ENCODE measurements at regions of chr11 and their contacts with region 1.

Region 1: GRCh38 chr11:119381181-119381988 is at the start of gene USP2:
- DNase-seq: peak; percentile 96
- ATAC-seq: peak; percentile 99
- H3K4me3 ChIP-seq: peak within 1 kb of the TSS; percentile 50
- H3K27ac ChIP-seq: no peak within 1 kb of the TSS; the same call in 1 of the 2 replicates
- H3K4me1 ChIP-seq: peaks cover 10% of the 10 kb centered on the region
- H3K27me3 ChIP-seq: peaks cover 20% of the 10 kb centered on the region
- CTCF ChIP-seq: peak; percentile 96
- POLR2A ChIP-seq: no peak; the same call in 1 of the 2 replicates
- RAD21 ChIP-seq: peak; percentile 72
- total RNA-seq, gene USP2: under 0.01 and 0.18 TPM in 2 replicates

Region 2: DNA sequence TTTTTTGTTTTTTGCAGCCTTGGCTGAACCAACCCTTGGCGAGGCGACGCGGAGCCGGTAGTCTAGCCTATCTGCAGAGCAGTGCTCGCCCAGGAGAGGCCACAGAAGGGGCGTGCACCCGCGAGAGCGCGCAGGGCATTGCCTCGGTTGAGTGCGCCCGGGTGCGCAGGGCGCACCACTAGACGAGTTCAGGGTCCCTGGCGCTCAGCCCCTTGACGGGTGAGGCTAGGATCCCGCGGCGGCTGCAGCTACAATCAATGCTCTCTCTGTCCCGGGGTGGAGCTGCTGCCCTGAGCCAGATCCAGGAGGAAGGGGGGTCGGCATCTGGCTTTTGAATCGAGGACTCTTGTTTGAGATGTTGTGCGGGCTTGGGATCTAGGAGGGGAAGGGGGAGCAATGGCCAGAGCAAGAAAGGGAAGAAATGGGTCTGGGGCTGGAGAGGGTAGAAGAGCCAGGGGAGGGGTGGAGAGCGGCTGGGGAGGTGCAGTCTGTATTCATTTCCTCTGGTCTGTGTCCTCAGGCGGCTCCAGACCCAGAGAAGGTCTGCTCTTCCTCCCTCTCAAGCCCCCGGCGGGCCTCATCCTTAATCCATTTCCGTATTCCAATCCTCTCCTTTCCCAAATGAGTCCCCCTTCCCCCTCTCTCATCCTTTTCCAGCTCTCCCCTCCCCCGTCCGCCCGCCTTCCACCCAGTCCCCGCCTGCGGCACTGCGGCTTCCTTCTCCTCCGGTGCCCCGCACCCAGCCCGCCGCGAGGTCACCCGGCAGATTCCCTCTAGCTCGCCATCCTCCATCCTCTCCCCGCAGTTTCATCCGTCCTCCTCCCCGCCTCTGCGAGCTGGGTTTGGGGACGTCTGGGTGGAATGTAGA is 40.8 kb after region 1 on chr11:
- CTCF ChIA-PET with region 1: no interaction called
- POLR2A ChIA-PET with region 1: no interaction called
- dilution Hi-C with region 1: no loop called
- in situ Hi-C with region 1: no loop called
- intact Hi-C with region 1: loop called (anchors 2 kb)
- DNase-seq: peak; percentile 34
- ATAC-seq: peak; percentile 45
- H3K4me3 ChIP-seq: peak overlapping the region; percentile 77
- H3K27ac ChIP-seq: peak overlapping the region; percentile 83
- H3K4me1 ChIP-seq: peaks cover 20% of the 10 kb centered on the region
- H3K27me3 ChIP-seq: no peaks in the 10 kb centered on the region
- CTCF ChIP-seq: no peak
- POLR2A ChIP-seq: no peak; the same call in 1 of the 2 replicates
- RAD21 ChIP-seq: no peak